CD4-positive, alpha-beta T cell (primary cell): ENCODE measurements at regions of chr14 and their contacts with region 1.

Region 1: DNA sequence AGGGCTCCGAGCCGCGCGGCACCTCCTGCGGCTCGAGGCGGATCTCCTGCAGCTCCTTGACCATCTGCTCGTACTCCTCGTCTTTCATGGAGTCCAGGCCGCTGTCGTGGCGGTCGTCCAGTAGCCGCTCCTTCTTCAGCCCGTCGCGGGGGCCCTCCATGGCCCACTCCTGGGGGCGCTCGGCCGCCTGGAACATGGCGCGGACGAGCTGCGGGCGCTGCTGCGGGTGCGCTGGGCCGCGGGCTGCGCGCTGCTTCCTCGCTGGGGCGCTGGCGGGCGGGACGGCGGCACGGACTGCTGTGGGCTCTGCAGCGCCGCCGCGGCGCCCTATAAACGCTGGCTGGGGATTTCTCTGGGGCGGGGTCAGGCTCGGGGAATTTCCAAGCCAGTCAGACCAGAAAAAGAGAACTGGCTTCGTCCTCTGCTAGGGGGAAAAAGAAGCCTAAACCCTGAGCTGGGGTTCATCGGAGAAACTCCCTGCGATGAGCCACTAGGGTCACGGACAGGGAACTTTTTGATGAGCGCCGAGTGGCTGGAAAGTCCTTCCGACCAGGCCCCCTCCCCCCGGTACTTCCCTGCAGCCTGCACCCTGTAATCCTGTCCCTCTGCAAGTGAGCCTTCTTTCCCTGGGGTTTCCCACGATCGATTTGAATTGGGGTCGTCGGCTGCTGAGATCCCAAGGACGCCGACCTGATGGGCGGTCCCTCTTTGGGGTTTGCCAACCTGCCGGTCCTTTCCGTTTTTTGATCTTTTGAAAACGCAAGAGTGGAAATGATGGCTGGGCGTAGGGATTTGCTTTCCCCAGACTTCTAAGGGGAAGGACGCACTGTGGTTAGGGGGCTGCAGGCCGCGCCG is at the start of gene NFKBIA:
- DNase-seq: peak; percentile 87 to 98 (median 93)
- ATAC-seq: peak; percentile 64
- H3K4me3 ChIP-seq: peak within 1 kb of the TSS; percentile 86
- H3K4me3 Mint-ChIP-seq: peak within 1 kb of the TSS; percentile 97
- H3K27ac ChIP-seq: peak within 1 kb of the TSS; percentile 98 to 100
- H3K27ac Mint-ChIP-seq: peak within 1 kb of the TSS; percentile 100
- H3K4me1 ChIP-seq: peaks cover 42% of the 10 kb centered on the region
- H3K4me1 Mint-ChIP-seq: peaks cover 62% of the 10 kb centered on the region
- H3K27me3 ChIP-seq: no peaks in the 10 kb centered on the region
- H3K27me3 Mint-ChIP-seq: no peaks in the 10 kb centered on the region
- CTCF ChIP-seq: peak; percentile 34
- total RNA-seq, gene NFKBIA: 977 to 1,030 TPM

Region 2: DNA sequence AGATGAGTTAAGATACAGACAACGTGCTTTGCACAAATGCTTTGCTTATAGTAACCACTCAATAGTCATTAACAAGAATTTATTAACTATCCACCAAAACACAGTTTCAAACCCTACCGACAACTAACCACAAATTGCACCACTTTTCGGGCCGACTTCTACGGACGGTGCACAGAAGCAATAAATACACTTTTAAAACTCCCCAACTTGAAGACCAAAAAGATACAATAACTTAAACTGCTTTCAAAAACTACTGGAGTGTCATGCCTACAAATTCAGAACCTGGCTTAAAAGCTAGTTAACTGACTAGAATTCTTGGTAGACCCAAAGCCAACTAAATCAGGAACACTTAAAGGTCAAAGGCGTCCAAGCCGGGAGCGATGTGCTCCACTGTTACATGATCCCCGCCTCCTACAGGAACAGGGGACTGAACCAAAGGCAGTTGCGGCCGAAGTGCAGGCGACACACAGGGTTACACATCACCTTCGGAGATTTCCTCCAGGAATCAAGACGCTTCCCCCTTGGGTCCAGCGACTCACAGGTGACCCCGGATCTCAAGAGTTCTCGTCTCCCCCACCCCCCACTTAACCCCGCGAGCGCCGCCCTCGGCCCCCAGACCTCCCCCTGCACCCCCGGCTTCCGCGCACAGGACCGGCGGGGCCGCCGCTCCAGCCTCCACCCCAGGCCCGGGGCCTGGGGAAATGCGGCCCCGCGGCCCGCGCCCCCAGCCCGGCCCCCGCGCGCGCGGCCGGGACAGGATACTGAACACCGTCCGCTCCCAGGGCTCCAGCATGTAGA is 943.1 kb before region 1 on chr14:
- CTCF ChIA-PET with region 1: no interaction called
- POLR2A ChIA-PET with region 1: no interaction called
- intact Hi-C with region 1: loop called in 1 of 2 experiments (anchors 5 kb)
- DNase-seq: peak in 6 of 14 experiments; percentile 4 to 48 (median 20)
- ATAC-seq: no peak
- H3K4me3 ChIP-seq: peak overlapping the region; percentile 78
- H3K4me3 Mint-ChIP-seq: peak overlapping the region; percentile 87
- H3K27ac ChIP-seq: no peak overlapping the region
- H3K27ac Mint-ChIP-seq: peak overlapping the region; percentile 50
- H3K4me1 ChIP-seq: peaks cover 12% of the 10 kb centered on the region
- H3K4me1 Mint-ChIP-seq: peaks cover 15% of the 10 kb centered on the region
- H3K27me3 ChIP-seq: no peaks in the 10 kb centered on the region
- H3K27me3 Mint-ChIP-seq: no peaks in the 10 kb centered on the region
- CTCF ChIP-seq: no peak

Region 3: DNA sequence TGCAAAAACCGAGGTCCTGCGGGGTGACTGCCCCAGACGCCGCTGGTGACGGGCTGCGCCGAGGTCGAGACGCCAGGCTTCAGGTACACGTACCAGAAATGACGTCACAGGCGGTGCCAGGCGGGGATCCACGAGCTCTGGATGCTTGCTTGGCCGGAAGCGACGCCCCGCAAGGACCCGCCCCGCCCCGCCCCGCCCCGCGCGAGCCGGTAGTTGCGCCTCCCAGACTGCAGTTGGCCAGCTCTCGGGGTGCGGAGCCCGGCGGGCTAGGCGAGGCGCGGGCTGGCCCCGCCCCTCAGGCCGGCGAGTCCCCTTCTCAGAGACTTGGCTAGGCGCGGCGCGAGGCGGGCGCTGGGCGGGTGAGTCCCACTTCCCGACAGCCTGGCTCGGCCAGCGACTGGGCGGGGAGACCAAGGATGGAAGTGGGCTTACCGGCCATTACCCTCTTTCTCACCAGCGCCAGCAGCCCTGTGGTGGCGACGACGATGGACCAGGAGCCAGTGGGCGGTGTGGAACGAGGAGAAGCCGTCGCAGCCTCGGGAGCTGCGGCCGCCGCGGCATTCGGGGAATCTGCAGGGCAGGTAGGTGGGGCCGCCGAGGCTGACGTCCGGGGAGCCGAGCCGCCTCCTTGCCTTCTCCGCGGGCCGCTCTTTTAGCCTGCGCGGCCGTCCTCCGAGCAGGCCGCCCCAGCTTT is 358.5 kb before region 1 on chr14 and contains the start of gene FAM177A1:
- CTCF ChIA-PET with region 1: interaction called, 3 read pairs
- POLR2A ChIA-PET with region 1: interaction called, 48 read pairs
- intact Hi-C with region 1: loop called in 1 of 2 experiments (anchors 2 kb)
- DNase-seq: peak; percentile 94 to 100 (median 98)
- ATAC-seq: peak; percentile 83
- H3K4me3 ChIP-seq: peak within 1 kb of the TSS; percentile 68
- H3K4me3 Mint-ChIP-seq: peak within 1 kb of the TSS; percentile 91
- H3K27ac ChIP-seq: peak within 1 kb of the TSS; percentile 96 to 97
- H3K27ac Mint-ChIP-seq: peak within 1 kb of the TSS; percentile 94
- H3K4me1 ChIP-seq: peaks cover 11% of the 10 kb centered on the region
- H3K4me1 Mint-ChIP-seq: peaks cover 36% of the 10 kb centered on the region
- H3K27me3 ChIP-seq: no peaks in the 10 kb centered on the region
- H3K27me3 Mint-ChIP-seq: no peaks in the 10 kb centered on the region
- CTCF ChIP-seq: no peak
- total RNA-seq, gene FAM177A1: 172 to 186 TPM

Region 4: DNA sequence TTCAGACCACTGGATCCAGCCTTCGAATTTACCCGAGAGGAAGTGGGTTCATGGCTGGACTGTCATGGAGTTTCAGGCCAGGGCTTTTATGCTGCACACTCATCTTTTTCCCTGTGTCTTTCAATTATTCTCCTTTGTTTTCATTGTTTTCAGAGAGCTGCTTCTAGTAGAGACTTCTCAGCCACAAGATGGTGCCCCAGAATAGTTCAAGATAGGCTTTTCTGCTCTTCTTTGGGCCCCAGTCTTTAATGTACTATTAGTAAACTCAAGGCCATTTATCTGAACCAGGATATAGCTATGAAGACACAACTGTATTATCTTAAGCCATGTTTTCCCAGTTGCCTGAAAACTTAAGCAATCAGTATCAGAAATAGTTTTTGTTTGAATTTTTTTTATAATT is 142.9 kb before region 1 on chr14:
- CTCF ChIA-PET with region 1: no interaction called
- POLR2A ChIA-PET with region 1: interaction called, 15 read pairs
- intact Hi-C with region 1: loop called in 1 of 2 experiments (anchors 1 kb)
- DNase-seq: peak in 3 of 14 experiments; percentile 32 to 37 (median 36)
- ATAC-seq: no peak
- H3K4me3 ChIP-seq: no peak overlapping the region
- H3K4me3 Mint-ChIP-seq: no peak overlapping the region
- H3K27ac ChIP-seq: no peak overlapping the region
- H3K27ac Mint-ChIP-seq: no peak overlapping the region
- H3K4me1 ChIP-seq: no peaks in the 10 kb centered on the region
- H3K4me1 Mint-ChIP-seq: peaks cover 6% of the 10 kb centered on the region
- H3K27me3 ChIP-seq: no peaks in the 10 kb centered on the region
- H3K27me3 Mint-ChIP-seq: no peaks in the 10 kb centered on the region
- CTCF ChIP-seq: peak; percentile 8

Region 5: DNA sequence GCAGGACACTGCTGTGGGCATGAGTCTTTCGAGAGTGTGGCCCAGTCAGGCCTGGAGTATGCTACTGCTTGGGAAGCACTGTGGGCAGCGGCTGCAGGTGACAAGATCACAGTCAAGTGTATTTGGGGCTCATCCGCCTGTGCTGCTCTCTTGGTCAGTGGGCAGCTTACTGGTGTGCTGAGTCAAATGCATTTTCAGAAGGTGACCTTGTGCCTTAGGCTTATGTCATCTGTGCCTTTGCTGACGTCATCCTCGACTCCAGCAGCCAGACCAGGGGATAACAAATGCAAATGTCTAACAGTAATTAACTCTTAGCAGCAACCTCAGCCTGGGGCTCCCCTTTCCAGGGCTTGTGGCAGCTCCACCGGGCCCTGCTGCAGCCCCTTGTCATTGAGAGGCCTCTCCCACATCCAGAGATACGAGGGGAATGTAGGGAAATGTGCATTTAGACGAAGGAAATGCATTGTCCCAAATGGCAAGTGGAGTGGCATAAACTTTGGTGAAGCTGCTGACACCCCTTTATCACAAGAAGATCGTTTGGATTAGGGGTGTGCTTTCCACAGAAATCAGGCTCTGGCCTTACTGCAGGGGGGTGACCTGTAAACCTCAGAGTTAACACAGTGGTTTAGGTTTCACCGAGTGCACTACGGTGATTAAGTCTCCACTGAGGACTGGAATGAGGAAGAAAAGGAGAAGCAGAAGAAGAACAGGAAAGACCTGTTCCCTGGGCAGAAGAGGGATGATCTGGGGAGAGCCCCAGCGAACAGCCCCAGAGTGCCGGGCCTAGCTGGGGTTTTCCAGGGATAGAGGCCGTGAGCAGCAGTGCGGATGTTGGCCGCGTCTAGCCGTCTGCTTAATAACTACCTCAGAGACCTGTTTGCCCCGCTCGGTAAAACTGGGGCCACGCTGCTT is 72.8 kb before region 1 on chr14:
- CTCF ChIA-PET with region 1: no interaction called
- POLR2A ChIA-PET with region 1: interaction called, 35 read pairs
- intact Hi-C with region 1: no loop called
- DNase-seq: peak in 2 of 14 experiments; percentile 59 to 65
- ATAC-seq: no peak
- H3K4me3 ChIP-seq: no peak overlapping the region
- H3K4me3 Mint-ChIP-seq: no peak overlapping the region
- H3K27ac ChIP-seq: peak overlapping the region in 1 of 2 donors; percentile 64
- H3K27ac Mint-ChIP-seq: peak overlapping the region; percentile 78
- H3K4me1 ChIP-seq: peaks cover 31% of the 10 kb centered on the region
- H3K4me1 Mint-ChIP-seq: peaks cover 27% of the 10 kb centered on the region
- H3K27me3 ChIP-seq: no peaks in the 10 kb centered on the region
- H3K27me3 Mint-ChIP-seq: no peaks in the 10 kb centered on the region
- CTCF ChIP-seq: no peak

Region 6: GRCh38 chr14:35349496-35350365 is 54.9 kb before region 1 on chr14:
- CTCF ChIA-PET with region 1: no interaction called
- POLR2A ChIA-PET with region 1: no interaction called
- intact Hi-C with region 1: no loop called
- DNase-seq: no peak
- ATAC-seq: no peak
- H3K4me3 ChIP-seq: no peak overlapping the region
- H3K4me3 Mint-ChIP-seq: no peak overlapping the region
- H3K27ac ChIP-seq: no peak overlapping the region
- H3K27ac Mint-ChIP-seq: no peak overlapping the region
- H3K4me1 ChIP-seq: peaks cover 2% of the 10 kb centered on the region
- H3K4me1 Mint-ChIP-seq: peaks cover 15% of the 10 kb centered on the region
- H3K27me3 ChIP-seq: no peaks in the 10 kb centered on the region
- H3K27me3 Mint-ChIP-seq: peaks cover 4% of the 10 kb centered on the region
- CTCF ChIP-seq: no peak

Region 7: DNA sequence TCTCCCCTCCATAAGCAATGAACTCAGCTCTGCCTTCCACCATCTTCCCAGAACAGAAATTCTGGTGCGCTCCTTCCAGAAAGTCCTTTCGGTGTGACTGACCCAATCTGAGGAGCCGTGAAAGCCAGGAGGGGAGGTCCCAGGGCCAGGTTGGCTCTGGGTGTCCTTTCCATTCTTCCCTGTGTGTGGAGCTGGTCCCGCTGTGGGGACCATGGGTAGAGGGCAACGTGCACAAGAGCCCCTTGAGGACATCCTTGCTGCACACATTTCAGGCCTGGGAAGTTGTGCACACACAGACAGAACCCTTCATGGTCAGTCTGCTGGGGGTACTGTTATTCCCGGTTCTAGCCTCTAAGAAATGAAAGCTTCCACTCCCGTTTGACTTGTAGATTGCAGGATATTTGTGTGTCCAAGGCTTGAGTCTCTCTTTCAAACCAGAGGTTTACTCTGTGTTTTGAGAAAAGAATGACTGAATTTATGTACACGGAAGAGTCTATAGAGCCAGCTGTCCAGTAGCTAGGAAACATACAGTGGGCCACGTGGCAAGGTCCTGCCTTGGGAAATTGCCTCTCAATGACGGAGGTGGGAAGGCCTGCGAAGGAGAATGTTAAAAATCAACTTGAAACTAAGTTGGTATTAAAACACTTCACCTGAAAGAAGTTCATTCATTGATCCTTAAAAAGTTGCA is 10.2 kb before region 1 on chr14:
- CTCF ChIA-PET with region 1: interaction called, 3 read pairs
- POLR2A ChIA-PET with region 1: interaction called, 11 read pairs
- intact Hi-C with region 1: no loop called
- DNase-seq: no peak
- ATAC-seq: no peak
- H3K4me3 ChIP-seq: no peak overlapping the region
- H3K4me3 Mint-ChIP-seq: no peak overlapping the region
- H3K27ac ChIP-seq: no peak overlapping the region
- H3K27ac Mint-ChIP-seq: no peak overlapping the region
- H3K4me1 ChIP-seq: peaks cover 8% of the 10 kb centered on the region
- H3K4me1 Mint-ChIP-seq: peaks cover 15% of the 10 kb centered on the region
- H3K27me3 ChIP-seq: no peaks in the 10 kb centered on the region
- H3K27me3 Mint-ChIP-seq: no peaks in the 10 kb centered on the region
- CTCF ChIP-seq: no peak

Region 8: GRCh38 chr14:36981832-36982528 is 1577.3 kb after region 1 on chr14:
- CTCF ChIA-PET with region 1: no interaction called
- POLR2A ChIA-PET with region 1: no interaction called
- intact Hi-C with region 1: no loop called
- DNase-seq: no peak
- ATAC-seq: no peak
- H3K4me3 ChIP-seq: no peak overlapping the region
- H3K4me3 Mint-ChIP-seq: no peak overlapping the region
- H3K27ac ChIP-seq: no peak overlapping the region
- H3K27ac Mint-ChIP-seq: no peak overlapping the region
- H3K4me1 ChIP-seq: no peaks in the 10 kb centered on the region
- H3K4me1 Mint-ChIP-seq: no peaks in the 10 kb centered on the region
- H3K27me3 ChIP-seq: no peaks in the 10 kb centered on the region
- H3K27me3 Mint-ChIP-seq: no peaks in the 10 kb centered on the region
- CTCF ChIP-seq: no peak